Left ventricle myocardium inferior (tissue), 1 donor: ENCODE measurements at regions of chr7 and their contacts with region 1.

Region 1: DNA sequence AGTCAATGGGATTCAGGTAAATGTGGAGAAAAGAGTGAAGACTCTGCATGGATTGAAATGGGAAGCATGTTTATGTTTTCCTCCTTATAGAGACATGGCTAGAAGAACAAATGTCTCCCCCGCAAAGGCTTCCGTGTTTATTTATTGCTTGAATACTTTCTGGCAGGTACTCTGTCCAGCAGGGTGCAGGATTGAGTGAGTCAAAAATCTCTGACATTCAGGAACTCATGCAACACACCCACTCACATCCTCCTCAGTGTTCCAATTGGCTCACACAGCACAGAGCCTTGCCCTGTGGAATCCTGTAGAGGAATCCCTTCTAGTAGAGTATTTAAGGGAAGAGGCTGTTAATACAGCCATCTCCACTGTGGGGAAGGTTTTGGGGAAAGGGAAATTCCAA is 290.3 kb upstream of the VWC2 start:
- DNase-seq: no peak
- H3K4me3 ChIP-seq: no peak overlapping the region
- H3K27ac ChIP-seq: no peak overlapping the region
- H3K4me1 ChIP-seq: peaks cover 11% of the 10 kb centered on the region
- H3K27me3 ChIP-seq: no peaks in the 10 kb centered on the region
- CTCF ChIP-seq: peak; percentile 59

Region 2: DNA sequence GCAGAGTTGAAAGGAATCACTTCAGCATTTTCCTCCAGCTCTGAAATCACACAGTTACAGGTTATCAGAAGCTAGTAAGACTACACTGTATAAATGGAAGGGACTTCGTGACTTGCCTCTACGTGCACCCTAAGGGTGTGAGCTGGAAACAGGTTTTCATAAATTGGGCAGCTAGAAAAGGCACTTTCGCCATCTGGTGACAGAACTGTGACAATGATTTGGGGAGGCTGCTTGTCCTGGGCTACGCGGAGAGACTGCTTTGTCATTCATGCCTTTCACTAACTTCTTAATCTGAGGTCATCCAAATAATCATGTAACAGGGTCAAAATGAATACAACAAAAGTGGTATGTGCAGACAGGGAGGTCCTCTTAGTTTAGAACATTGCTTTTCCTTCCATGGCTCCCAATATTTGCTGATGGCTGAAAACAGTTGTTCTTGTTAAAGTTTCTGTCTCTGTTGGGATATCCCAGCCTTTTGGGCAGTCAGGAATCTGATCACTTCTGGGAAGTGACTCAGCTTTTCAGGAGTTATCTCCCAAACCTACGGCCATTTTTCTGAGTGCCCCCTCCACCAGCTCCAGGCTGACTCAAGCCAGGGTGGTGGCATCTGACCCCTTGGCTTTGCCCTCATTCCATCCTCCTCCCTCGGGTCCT is 308.1 kb after region 1 on chr7:
- intact Hi-C with region 1: loop called (anchors 10 kb)
- DNase-seq: no peak
- H3K4me3 ChIP-seq: no peak overlapping the region
- H3K27ac ChIP-seq: peak overlapping the region; percentile 56
- H3K4me1 ChIP-seq: peaks cover 46% of the 10 kb centered on the region
- H3K27me3 ChIP-seq: no peaks in the 10 kb centered on the region
- CTCF ChIP-seq: peak; percentile 69